AG04449 (cell line): ENCODE measurements at regions of chr16 and their contacts with region 1.

Region 1: GRCh38 chr16:58515125-58515870 is at the start of gene SETD6:
- DNase-seq: peak; percentile 33
- H3K4me3 ChIP-seq: peak within 1 kb of the TSS; percentile 83
- CTCF ChIP-seq: peak; percentile 19

Region 2: GRCh38 chr16:58494981-58495520 is 20.2 kb before region 1 on chr16:
- CTCF ChIA-PET with region 1: interaction called, 29 read pairs
- POLR2A ChIA-PET with region 1: interaction called, 3 read pairs
- DNase-seq: peak; percentile 87
- H3K4me3 ChIP-seq: peak overlapping the region; percentile 19
- CTCF ChIP-seq: peak; percentile 83

Region 3: GRCh38 chr16:58620396-58620795 is 105.1 kb after region 1 on chr16:
- CTCF ChIA-PET with region 1: no interaction called
- POLR2A ChIA-PET with region 1: no interaction called
- DNase-seq: no peak
- H3K4me3 ChIP-seq: no peak overlapping the region
- CTCF ChIP-seq: no peak

Region 4: DNA sequence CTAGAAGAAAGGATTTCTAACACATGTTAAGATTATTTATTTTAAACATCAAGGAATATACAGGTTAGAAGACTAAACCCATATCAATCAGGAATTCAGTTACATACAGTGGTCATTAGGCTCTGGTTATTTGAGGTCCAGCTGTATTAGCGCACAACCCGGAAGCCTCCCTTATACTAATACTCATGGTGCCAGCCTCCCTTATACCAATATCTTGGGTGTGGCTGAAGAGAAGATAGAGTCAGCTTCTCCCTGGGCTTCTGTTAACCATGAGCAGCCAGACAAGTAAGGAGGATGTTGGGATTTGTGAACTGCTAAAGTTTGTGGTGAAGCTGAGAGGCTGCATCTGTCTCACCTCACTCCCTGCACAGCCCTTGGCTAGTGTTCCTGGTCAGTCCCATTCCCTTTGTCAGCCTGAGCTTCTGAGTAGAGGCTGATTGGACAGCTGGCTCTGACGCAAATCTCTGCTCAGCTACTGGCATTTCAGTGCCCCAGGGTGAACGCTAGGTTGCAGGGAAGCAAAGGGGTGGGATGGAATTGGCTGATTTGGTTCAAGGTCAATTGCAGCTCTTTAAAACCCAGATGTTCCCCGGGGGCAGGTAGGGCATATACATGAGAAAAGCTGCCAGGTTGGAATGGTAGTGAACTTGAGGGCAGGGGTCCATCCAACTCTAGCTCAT is 137.3 kb after region 1 on chr16:
- CTCF ChIA-PET with region 1: interaction called, 78 read pairs
- POLR2A ChIA-PET with region 1: no interaction called
- DNase-seq: no peak
- H3K4me3 ChIP-seq: no peak overlapping the region
- CTCF ChIP-seq: no peak

Region 5: GRCh38 chr16:58661199-58661830 is 146.0 kb after region 1 on chr16:
- CTCF ChIA-PET with region 1: interaction called, 78 read pairs
- POLR2A ChIA-PET with region 1: no interaction called
- DNase-seq: peak; percentile 56
- H3K4me3 ChIP-seq: no peak overlapping the region
- CTCF ChIP-seq: peak; percentile 67

Region 6: GRCh38 chr16:58733671-58734458 is 218.6 kb after region 1 on chr16 and contains the start of gene GOT2:
- CTCF ChIA-PET with region 1: no interaction called
- POLR2A ChIA-PET with region 1: no interaction called
- DNase-seq: no peak
- H3K4me3 ChIP-seq: peak within 1 kb of the TSS; percentile 86
- CTCF ChIP-seq: peak; percentile 99